HepG2 (cell line): ENCODE measurements at regions of chr15 and their contacts with region 1.

Region 1: DNA sequence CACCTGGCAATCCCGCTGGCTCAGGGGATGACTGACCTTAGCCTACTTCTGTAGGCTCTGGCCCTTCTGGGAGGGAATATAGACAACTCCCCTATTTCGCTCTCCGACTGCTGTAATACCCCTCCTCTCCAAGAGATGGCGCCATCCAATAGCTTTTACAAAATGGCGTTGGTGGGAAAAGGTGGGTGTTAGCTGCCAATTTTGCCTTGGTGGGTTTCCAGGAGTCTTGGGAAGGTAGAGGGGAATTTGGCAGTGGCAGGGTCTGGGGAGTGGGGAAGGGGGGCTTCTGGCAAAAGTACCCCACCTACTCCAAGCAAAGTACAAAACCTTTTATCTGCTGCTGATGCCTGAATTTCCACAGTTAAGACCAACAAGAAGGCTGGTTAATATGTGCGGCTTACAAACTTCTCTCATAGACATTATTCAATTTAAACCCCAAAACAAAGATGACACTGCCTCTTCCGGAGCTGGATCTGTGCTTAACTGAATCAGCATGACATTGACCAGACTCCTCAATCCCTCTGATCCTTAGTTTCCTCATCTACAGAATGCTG is 62.1 kb downstream of the RASGRF1 start:
- DNase-seq: peak; percentile 63
- ATAC-seq: peak; percentile 55
- H3K4me3 ChIP-seq: no peak overlapping the region
- H3K27ac ChIP-seq: no peak overlapping the region
- H3K4me1 ChIP-seq: peaks cover 51% of the 10 kb centered on the region
- H3K27me3 ChIP-seq: no peaks in the 10 kb centered on the region
- CTCF ChIP-seq: peak; percentile 89
- EP300 ChIP-seq: no peak
- POLR2A ChIP-seq: no peak
- RAD21 ChIP-seq: peak; percentile 72

Region 2: GRCh38 chr15:78811124-78811824 is 217.2 kb before region 1 on chr15 and contains the start of gene ADAMTS7:
- CTCF ChIA-PET with region 1: no interaction called
- POLR2A ChIA-PET with region 1: no interaction called
- in situ Hi-C with region 1: no loop called
- intact Hi-C with region 1: no loop called
- DNase-seq: no peak
- ATAC-seq: peak; percentile 83
- H3K4me3 ChIP-seq: peak within 1 kb of the TSS; percentile 58 to 75 (median 63)
- H3K27ac ChIP-seq: no peak within 1 kb of the TSS
- H3K4me1 ChIP-seq: peaks cover 19% of the 10 kb centered on the region
- H3K27me3 ChIP-seq: peaks cover 12 to 51% of the 10 kb centered on the region in 2 experiments
- CTCF ChIP-seq: peak; percentile 52
- EP300 ChIP-seq: no peak
- POLR2A ChIP-seq: no peak
- RAD21 ChIP-seq: no peak
- total RNA-seq, gene ADAMTS7: 0.09 TPM in 1 of 2 replicates, not detected in the other

Region 3: DNA sequence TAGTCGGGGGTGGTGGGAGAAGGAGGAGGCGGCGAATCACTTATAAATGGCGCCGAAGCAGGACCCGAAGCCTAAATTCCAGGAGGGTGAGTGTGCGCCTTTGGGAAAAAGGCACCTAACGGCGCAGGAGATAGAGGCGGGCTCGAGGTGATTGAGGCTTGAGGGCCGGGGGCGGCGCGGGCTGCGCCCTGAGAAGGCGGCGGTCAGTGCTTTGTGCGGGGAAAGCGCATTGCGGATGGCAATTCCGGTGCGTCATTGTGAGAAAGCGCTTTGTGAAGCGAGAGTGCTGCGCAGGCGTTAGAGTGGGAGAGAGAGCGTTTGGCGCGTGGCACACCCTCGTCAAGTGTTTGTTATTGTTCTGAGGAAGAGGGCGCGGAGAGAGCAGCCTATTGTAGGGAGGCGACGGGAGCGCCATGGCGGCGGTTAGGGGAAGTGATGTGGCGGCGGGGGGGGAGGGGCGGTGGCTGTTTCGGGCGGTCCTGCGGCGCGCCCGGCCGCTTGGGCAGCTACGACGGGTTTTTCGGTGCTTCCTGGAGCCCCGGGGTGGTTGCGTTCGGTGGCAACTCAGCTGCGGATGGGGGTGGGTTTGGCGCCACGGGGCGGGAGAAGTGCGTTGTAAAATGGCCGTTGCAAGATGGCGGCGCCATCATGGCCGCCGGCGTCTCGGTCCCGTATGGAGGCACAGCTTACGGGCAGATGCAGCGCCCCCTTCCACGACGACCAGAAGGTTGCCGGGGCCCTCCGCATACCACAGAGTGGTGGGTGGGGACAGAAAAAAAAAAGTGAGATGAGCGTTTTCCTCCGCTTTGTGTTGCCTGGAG is 155.3 kb before region 1 on chr15:
- CTCF ChIA-PET with region 1: no interaction called
- POLR2A ChIA-PET with region 1: no interaction called
- in situ Hi-C with region 1: no loop called
- intact Hi-C with region 1: no loop called
- DNase-seq: peak; percentile 81
- ATAC-seq: peak; percentile 82
- H3K4me3 ChIP-seq: peak overlapping the region; percentile 97 to 100 (median 100)
- H3K27ac ChIP-seq: peak overlapping the region; percentile 100
- H3K4me1 ChIP-seq: peaks cover 56% of the 10 kb centered on the region
- H3K27me3 ChIP-seq: peaks cover 0 to 5% of the 10 kb centered on the region in 2 experiments; a peak in 2 of 5 replicates
- CTCF ChIP-seq: peak; percentile 79
- EP300 ChIP-seq: peak in 1 of 2 experiments; percentile 21; a peak in 1 of 4 replicates
- POLR2A ChIP-seq: peak; percentile 55 to 74
- RAD21 ChIP-seq: peak; percentile 33; the same call in 1 of the 2 replicates

Region 4: GRCh38 chr15:78950904-78951840 is 77.3 kb before region 1 on chr15:
- CTCF ChIA-PET with region 1: no interaction called
- POLR2A ChIA-PET with region 1: no interaction called
- in situ Hi-C with region 1: no loop called
- intact Hi-C with region 1: no loop called
- DNase-seq: peak; percentile 61
- ATAC-seq: peak; percentile 81
- H3K4me3 ChIP-seq: peak overlapping the region in 1 of 3 experiments; percentile 34; a peak in 2 of 6 replicates
- H3K27ac ChIP-seq: no peak overlapping the region
- H3K4me1 ChIP-seq: peaks cover 76% of the 10 kb centered on the region
- H3K27me3 ChIP-seq: no peaks in the 10 kb centered on the region; a peak in 1 of 5 replicates
- CTCF ChIP-seq: peak; percentile 35
- EP300 ChIP-seq: no peak
- POLR2A ChIP-seq: no peak
- RAD21 ChIP-seq: no peak

Region 5: GRCh38 chr15:78996894-78997275 is 31.6 kb before region 1 on chr15:
- CTCF ChIA-PET with region 1: no interaction called
- POLR2A ChIA-PET with region 1: interaction called, 12 read pairs
- in situ Hi-C with region 1: no loop called
- intact Hi-C with region 1: no loop called
- DNase-seq: peak; percentile 87
- ATAC-seq: peak; percentile 37
- H3K4me3 ChIP-seq: peak overlapping the region in 1 of 3 experiments; percentile 24; a peak in 2 of 6 replicates
- H3K27ac ChIP-seq: peak overlapping the region; percentile 60
- H3K4me1 ChIP-seq: peaks cover 70% of the 10 kb centered on the region
- H3K27me3 ChIP-seq: no peaks in the 10 kb centered on the region
- CTCF ChIP-seq: no peak
- EP300 ChIP-seq: peak in 1 of 2 experiments; percentile 75; a peak in 2 of 4 replicates
- POLR2A ChIP-seq: no peak
- RAD21 ChIP-seq: no peak

Region 6: DNA sequence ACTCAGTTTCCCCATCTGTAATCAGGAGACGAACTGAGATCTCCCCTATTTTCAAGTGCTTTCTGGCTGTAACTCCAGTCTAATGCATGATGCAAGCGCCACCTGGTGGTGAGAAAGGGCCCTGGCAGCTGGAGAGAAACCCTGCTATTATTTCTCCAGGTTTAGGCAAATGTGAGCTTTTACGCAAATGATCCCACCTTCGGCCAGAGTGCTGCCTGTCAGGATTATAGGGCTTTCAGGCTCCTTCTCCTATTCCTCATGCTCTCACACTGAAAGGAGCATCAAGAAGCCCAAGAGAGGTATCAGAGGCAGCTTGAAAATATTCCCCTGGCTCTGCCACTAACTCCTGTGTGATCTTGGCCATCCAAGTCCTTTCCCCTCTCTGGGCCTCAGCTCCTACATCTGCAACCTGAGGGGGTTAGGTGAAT is 156.0 kb after region 1 on chr15:
- CTCF ChIA-PET with region 1: interaction called, 56 read pairs
- POLR2A ChIA-PET with region 1: interaction called, 8 read pairs
- in situ Hi-C with region 1: loop called (anchors 5 kb)
- intact Hi-C with region 1: no loop called
- DNase-seq: peak; percentile 59
- ATAC-seq: peak; percentile 87
- H3K4me3 ChIP-seq: no peak overlapping the region
- H3K27ac ChIP-seq: no peak overlapping the region
- H3K4me1 ChIP-seq: peaks cover 3% of the 10 kb centered on the region
- H3K27me3 ChIP-seq: peaks cover 1 to 14% of the 10 kb centered on the region in 2 experiments; a peak in 4 of 5 replicates
- CTCF ChIP-seq: peak; percentile 87
- EP300 ChIP-seq: no peak
- POLR2A ChIP-seq: no peak
- RAD21 ChIP-seq: peak; percentile 69

Region 7: DNA sequence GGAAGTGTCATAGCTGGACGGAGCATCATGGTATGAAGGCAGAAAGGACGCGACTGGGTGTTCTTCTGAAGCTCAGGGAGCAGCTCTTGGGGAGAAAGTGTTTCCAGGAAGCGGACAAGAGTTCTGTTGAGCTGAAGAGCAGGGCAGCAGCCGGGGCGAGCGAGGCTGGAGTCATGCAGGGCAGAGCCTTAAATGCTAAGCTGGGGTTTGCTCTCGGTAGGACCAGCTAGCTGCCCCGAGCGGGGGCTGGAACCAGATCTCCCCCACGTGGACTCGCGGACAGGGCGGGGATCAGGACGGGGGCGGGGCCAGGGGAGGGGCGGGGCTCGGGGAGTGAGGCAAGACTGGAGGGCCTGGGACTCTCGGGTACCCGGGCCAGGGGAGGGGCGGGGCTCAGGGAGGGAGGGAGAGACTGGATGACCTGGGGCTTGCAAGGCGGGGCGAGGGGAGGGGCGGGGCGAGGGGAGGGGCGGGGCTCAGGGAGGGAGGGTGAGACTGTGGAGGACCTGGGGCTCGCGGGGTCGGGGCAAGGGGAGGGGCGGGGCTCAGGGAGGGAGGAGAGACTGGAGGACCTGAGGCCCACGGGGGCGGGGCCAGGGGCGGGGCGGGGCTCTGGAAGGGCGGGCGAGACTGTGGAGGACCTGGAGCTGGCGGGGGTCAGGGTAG is 1123.8 kb after region 1 on chr15:
- CTCF ChIA-PET with region 1: no interaction called
- POLR2A ChIA-PET with region 1: no interaction called
- in situ Hi-C with region 1: no loop called
- intact Hi-C with region 1: no loop called
- DNase-seq: peak; percentile 90
- ATAC-seq: peak; percentile 67
- H3K4me3 ChIP-seq: peak overlapping the region; percentile 64 to 89 (median 72)
- H3K27ac ChIP-seq: peak overlapping the region; percentile 48
- H3K4me1 ChIP-seq: peaks cover 57% of the 10 kb centered on the region
- H3K27me3 ChIP-seq: no peaks in the 10 kb centered on the region; a peak in 1 of 5 replicates
- CTCF ChIP-seq: no peak
- EP300 ChIP-seq: no peak
- POLR2A ChIP-seq: peak; percentile 35 to 69; a peak in 2 of 4 replicates
- RAD21 ChIP-seq: no peak